Activated T-helper 1 cell treated with anti-CD3 and anti-CD28 coated beads, Interleukin-12 subunit alpha, Interleukin-12 subunit beta, Interleukin-2, Interleukin-4 antibody, amounts not matched to agents 30 ng/mL and 10 ng/mL and 1 ng/mL, durations not matched to agents 14 hours and 24 hours and 36 hours (primary cell): ENCODE measurements at regions of chr11 and their contacts with region 1.

Region 1: GRCh38 chr11:61041755-61042518 is 60.4 kb upstream of the CD5 start:
- DNase-seq: peak; percentile 86
- H3K4me3 Mint-ChIP-seq: peak overlapping the region; percentile 72
- H3K27ac Mint-ChIP-seq: peak overlapping the region; percentile 91
- H3K4me1 Mint-ChIP-seq: peaks cover 55% of the 10 kb centered on the region
- H3K27me3 Mint-ChIP-seq: no peaks in the 10 kb centered on the region

Region 2: DNA sequence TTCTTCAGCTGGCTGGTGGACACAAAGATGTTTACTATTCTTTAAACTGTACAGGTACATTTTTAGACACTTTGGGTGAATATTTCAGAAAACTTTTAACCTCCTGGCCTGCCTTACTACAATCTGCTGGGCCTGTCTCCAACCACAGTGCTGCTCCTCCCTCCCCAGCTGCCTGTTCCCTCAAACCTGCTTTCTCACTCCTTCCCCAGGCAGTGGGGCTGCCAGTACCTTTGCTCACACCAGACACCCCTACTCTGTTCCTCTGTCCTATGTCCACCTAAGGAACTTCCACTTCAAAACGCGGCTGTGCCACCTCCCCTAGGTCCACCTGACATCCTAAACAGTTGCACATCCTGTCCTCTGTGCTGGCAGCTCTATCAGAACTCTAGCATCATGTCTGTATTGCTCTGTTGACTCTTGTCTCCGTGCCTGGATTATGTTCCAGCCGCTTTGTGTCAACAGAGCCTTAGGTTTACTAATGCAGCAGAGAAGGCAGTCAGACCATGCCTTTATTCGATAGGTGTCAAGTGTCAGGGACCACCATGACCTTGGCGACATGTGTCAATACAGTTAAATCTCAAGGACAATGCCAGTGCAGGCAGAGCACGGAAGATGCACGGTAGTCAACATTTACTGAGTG is 161.2 kb before region 1 on chr11:
- intact Hi-C with region 1: no loop called
- DNase-seq: no peak
- H3K4me3 Mint-ChIP-seq: no peak overlapping the region
- H3K27ac Mint-ChIP-seq: no peak overlapping the region
- H3K4me1 Mint-ChIP-seq: peaks cover 4% of the 10 kb centered on the region
- H3K27me3 Mint-ChIP-seq: peaks cover 2% of the 10 kb centered on the region

Region 3: GRCh38 chr11:60992842-60993409 is 49.0 kb before region 1 on chr11:
- intact Hi-C with region 1: no loop called
- DNase-seq: no peak
- H3K4me3 Mint-ChIP-seq: peak overlapping the region; percentile 68
- H3K27ac Mint-ChIP-seq: peak overlapping the region; percentile 95
- H3K4me1 Mint-ChIP-seq: peaks cover 72% of the 10 kb centered on the region
- H3K27me3 Mint-ChIP-seq: no peaks in the 10 kb centered on the region

Region 4: GRCh38 chr11:61004180-61004611 is 37.7 kb before region 1 on chr11:
- intact Hi-C with region 1: loop called (anchors 2 kb)
- DNase-seq: no peak
- H3K4me3 Mint-ChIP-seq: peak overlapping the region; percentile 68
- H3K27ac Mint-ChIP-seq: peak overlapping the region; percentile 87
- H3K4me1 Mint-ChIP-seq: peaks cover 73% of the 10 kb centered on the region
- H3K27me3 Mint-ChIP-seq: no peaks in the 10 kb centered on the region

Region 5: GRCh38 chr11:61054927-61055562 is 13.1 kb after region 1 on chr11:
- intact Hi-C with region 1: loop called (anchors 1 kb)
- DNase-seq: no peak
- H3K4me3 Mint-ChIP-seq: no peak overlapping the region
- H3K27ac Mint-ChIP-seq: peak overlapping the region; percentile 66
- H3K4me1 Mint-ChIP-seq: peaks cover 72% of the 10 kb centered on the region
- H3K27me3 Mint-ChIP-seq: no peaks in the 10 kb centered on the region